Activated CD4-positive, alpha-beta T cell treated with anti-CD3 and anti-CD28 coated beads, Interleukin-2, amount 10 ng/mL, durations not matched to agents 24 days and 14 days (primary cell): ENCODE measurements at regions of chr7 and their contacts with region 1.

Region 1: GRCh38 chr7:138900035-138900828 is 81.0 kb downstream of the KIAA1549 start:
- DNase-seq: no peak
- H3K4me3 Mint-ChIP-seq: no peak overlapping the region
- H3K27ac Mint-ChIP-seq: no peak overlapping the region
- H3K4me1 Mint-ChIP-seq: peaks cover 52% of the 10 kb centered on the region
- H3K27me3 Mint-ChIP-seq: peaks cover 34% of the 10 kb centered on the region

Region 2: GRCh38 chr7:138796038-138796580 is 104.1 kb before region 1 on chr7:
- intact Hi-C with region 1: no loop called
- DNase-seq: no peak
- H3K4me3 Mint-ChIP-seq: no peak overlapping the region
- H3K27ac Mint-ChIP-seq: no peak overlapping the region
- H3K4me1 Mint-ChIP-seq: peaks cover 12% of the 10 kb centered on the region
- H3K27me3 Mint-ChIP-seq: peaks cover 9% of the 10 kb centered on the region

Region 3: GRCh38 chr7:138875794-138876193 is 24.4 kb before region 1 on chr7:
- intact Hi-C with region 1: loop called (anchors 1 kb)
- DNase-seq: peak; percentile 92
- H3K4me3 Mint-ChIP-seq: no peak overlapping the region
- H3K27ac Mint-ChIP-seq: peak overlapping the region; percentile 46
- H3K4me1 Mint-ChIP-seq: peaks cover 18% of the 10 kb centered on the region
- H3K27me3 Mint-ChIP-seq: peaks cover 10% of the 10 kb centered on the region

Region 4: DNA sequence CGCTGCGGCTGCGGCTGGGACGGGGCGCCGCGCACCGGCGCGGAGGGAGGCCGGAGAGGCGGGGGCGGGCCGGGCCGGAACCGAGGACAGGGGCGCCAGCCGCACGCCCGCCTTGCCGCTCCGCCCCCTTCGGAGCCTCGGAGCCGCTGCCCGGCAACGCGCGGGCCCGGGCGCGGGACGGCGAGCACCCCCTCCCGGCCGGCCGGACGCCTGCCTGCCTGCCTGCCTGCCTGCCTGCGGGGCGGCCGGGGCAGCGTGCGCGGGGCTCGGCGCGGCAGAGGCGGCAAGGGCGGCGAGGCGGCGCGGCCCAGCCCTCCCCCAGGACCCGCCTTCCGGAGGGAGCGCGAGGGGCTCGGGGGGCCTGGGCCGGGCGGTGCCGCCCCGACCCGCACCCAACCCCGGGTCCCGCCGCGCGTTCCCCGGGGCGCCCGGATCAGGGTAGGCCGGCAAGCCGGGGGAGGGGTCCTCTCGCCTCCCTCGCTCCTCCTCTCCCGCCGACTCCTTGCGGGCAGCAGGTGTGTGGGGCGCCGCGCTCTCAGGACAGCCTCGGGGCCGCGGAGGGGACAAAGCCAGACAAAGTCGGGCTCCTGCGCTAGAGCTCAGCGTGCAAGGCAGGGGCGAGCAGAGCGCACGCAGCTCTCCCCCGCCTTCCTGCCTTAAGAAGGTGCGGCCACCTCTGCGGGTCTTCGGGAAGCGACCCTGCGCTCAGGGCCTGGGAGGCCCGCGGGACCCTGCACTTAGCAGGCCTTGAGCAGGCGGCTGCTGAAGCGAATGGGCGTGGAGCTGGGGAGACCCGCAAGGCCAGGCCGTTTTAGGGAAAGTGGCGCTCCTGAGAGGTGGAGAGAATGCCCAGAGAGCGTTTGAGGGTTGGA is 81.3 kb after region 1 on chr7 and contains the start of gene KIAA1549:
- intact Hi-C with region 1: loop called (anchors 5 kb)
- DNase-seq: peak; percentile 88
- H3K4me3 Mint-ChIP-seq: peak within 1 kb of the TSS; percentile 85
- H3K27ac Mint-ChIP-seq: peak within 1 kb of the TSS; percentile 46
- H3K4me1 Mint-ChIP-seq: peaks cover 11% of the 10 kb centered on the region
- H3K27me3 Mint-ChIP-seq: peaks cover 61% of the 10 kb centered on the region
- total RNA-seq, gene KIAA1549: 0.77 and 0.95 TPM in 2 replicates

Region 5: GRCh38 chr7:139016931-139017511 is 116.8 kb after region 1 on chr7:
- intact Hi-C with region 1: no loop called
- DNase-seq: peak; percentile 89
- H3K4me3 Mint-ChIP-seq: no peak overlapping the region
- H3K27ac Mint-ChIP-seq: no peak overlapping the region
- H3K4me1 Mint-ChIP-seq: peaks cover 7% of the 10 kb centered on the region
- H3K27me3 Mint-ChIP-seq: peaks cover 17% of the 10 kb centered on the region

Region 6: DNA sequence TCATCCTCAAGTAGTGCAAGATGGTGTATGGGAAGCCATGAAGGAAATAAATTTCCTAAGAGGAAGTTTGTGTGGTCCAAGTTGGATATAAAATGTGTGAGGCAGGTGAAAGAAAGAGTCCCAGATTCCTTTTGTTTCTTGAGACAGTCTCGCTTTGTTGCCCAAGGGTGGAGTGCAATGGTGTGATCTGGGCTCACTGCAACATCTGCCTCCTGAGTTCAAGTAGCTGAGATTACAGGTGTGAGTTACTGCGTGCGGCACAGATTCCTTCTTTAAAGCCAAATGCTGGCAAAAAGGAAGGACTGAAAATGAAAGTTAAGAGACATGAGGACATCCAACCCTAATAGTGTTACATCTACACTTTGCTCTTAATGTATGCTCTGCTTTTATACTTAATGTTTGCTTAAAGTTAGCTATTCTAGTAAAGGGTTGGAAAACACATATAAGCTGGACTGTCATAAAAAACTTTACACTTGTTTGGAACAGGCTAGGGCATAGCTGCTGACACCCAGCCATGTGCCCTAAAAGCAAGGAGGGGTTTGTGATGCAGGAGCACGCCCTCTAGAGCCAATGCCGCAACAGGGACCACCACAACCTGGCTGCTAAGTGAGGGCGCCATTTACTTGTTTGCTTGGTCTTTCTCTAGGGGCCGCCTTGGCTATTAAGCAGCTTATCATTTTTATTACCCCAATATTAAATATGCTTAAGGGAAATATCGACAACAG is 657.8 kb after region 1 on chr7:
- intact Hi-C with region 1: no loop called
- DNase-seq: no peak
- H3K4me3 Mint-ChIP-seq: no peak overlapping the region
- H3K27ac Mint-ChIP-seq: no peak overlapping the region
- H3K4me1 Mint-ChIP-seq: no peaks in the 10 kb centered on the region
- H3K27me3 Mint-ChIP-seq: peaks cover 10% of the 10 kb centered on the region